ENCODE measurements at regions of chr1 and their contacts with region 1.

Region 1: DNA sequence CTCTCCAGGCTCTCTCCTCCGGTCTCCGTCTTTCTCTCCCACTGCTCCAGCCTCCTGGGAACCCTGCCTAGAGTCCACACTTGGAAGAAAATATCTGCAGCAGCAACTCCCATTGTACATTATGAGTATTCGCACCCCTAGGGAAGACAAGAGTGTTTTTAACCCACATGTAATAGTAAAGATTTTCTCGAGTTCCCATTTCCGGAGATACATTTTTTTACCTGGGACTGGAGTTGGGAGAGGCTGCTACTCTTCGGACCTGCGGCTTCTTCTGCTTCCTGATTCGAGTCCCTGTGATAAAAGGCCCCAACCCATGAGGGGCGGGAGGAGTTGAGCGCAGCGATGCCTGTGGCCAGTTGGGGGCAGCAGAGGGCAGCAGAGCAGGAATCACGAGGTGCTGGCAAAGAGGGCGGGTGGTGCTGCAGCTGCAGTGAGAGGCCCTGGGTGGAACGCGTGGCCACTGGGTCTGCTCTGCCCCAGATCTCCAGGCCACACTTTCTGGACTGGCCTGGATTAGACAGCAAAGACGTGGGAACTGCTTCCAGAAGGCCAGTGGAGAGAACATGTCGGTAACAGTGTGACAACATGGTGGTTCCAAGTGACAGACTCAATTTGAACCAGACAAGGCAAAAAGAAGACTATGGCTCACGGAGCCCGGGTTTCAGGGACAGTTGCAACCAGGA is 221.0 kb upstream of the CSF3R start:
- DNase-seq: peak; percentile 37
- H3K4me3 ChIP-seq: no peak overlapping the region
- H3K27ac ChIP-seq: no peak overlapping the region
- H3K4me1 ChIP-seq: no peaks in the 10 kb centered on the region
- H3K27me3 ChIP-seq: peaks cover 2% of the 10 kb centered on the region
- CTCF ChIP-seq: peak; percentile 87 to 90

Region 2: DNA sequence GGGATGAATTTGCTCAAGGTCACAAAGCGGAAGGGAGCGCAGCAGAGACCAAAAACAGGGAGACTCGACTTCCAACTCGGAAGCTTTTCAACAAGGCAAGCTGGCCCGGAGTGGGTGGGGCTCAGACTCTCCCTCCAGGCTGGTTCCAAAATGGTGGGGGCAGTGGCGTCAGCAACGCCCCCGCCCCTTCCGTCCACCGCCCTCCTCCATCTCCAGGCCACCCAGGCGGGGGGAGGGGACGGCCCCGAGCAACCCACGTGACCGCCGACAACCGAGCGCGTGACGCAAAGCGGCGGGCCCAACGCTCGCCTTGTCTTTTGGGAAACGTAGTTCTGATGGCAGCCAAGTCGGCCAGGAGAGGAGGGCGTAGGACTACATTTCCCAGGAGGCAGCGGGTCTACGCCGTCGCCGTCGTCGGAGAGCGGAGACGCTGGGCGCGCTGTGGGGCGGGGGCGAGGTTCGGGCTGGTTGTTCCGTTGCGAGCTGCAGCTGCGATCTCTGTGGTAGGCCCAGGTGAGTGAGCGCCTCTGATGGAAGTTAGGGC is 479.6 kb before region 1 on chr1 and contains the start of gene THRAP3:
- CTCF ChIA-PET with region 1: no interaction called
- dilution Hi-C with region 1: no loop called
- in situ Hi-C with region 1: no loop called
- intact Hi-C with region 1: no loop called
- DNase-seq: peak; percentile 100
- H3K4me3 ChIP-seq: peak within 1 kb of the TSS; percentile 86 to 90 (median 89)
- H3K27ac ChIP-seq: peak within 1 kb of the TSS; percentile 98
- H3K4me1 ChIP-seq: peaks cover 8% of the 10 kb centered on the region
- H3K27me3 ChIP-seq: no peaks in the 10 kb centered on the region
- CTCF ChIP-seq: no peak
- total RNA-seq, gene THRAP3: 106 to 128 TPM

Region 3: DNA sequence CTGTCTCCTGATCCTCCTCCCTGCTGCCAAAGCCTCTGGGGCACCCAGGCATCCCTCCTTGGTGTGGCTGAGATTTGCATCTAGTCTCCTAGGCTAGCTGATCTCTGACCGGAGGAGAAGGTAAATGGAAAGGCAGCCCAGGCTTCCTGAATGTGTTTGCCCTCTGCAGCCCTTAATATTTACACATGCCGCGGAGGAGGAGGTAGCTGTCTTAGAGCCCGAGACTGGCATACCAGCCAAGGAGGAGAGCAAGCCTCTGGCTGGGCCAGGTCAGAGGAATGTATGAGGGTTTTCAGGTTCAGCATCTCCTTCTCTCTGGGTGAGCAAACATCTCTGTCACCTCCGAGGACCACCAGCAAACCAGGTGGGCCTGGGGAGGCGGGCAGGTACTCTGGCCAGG is 416.6 kb after region 1 on chr1:
- CTCF ChIA-PET with region 1: no interaction called
- dilution Hi-C with region 1: no loop called
- in situ Hi-C with region 1: no loop called
- intact Hi-C with region 1: no loop called
- DNase-seq: no peak
- H3K4me3 ChIP-seq: no peak overlapping the region
- H3K27ac ChIP-seq: no peak overlapping the region
- H3K4me1 ChIP-seq: no peaks in the 10 kb centered on the region
- H3K27me3 ChIP-seq: no peaks in the 10 kb centered on the region
- CTCF ChIP-seq: no peak

Region 4: DNA sequence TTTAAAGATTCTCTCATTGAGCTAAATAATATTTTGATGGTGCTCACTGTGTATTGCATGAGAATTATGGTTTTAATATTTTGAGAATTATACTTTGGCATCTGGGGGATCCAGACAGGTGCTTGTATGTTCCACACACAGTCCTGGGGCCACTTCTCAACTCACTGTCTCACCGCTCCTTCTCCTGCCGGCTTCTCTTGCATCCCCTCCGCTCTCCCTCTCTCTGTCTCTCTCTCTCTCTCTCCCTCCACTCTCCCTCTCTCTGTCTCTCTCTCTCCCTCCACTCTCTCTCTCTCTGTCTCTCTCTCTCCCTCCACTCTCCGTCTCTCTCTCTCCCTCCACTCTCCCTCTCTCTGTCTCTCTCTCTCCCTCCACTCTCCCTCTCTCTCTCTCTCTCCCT is 738.5 kb after region 1 on chr1:
- CTCF ChIA-PET with region 1: no interaction called
- dilution Hi-C with region 1: loop called (anchors 5 kb)
- in situ Hi-C with region 1: no loop called
- intact Hi-C with region 1: no loop called
- DNase-seq: no peak
- H3K4me3 ChIP-seq: no peak overlapping the region
- H3K27ac ChIP-seq: no peak overlapping the region
- H3K4me1 ChIP-seq: no peaks in the 10 kb centered on the region
- H3K27me3 ChIP-seq: no peaks in the 10 kb centered on the region
- CTCF ChIP-seq: no peak

Measured in mammary epithelial cell (primary cell).